Activated CD4-positive, alpha-beta memory T cell treated with anti-CD3 and anti-CD28 coated beads, Interleukin-2, amount 10 ng/mL, durations not matched to agents 7 days and 5 days (primary cell): ENCODE measurements at regions of chr2 and their contacts with region 1.

Region 1: GRCh38 chr2:136135921-136136906 is 18.3 kb upstream of the CXCR4 start:
- DNase-seq: peak; percentile 67
- H3K4me3 Mint-ChIP-seq: no peak overlapping the region
- H3K27ac Mint-ChIP-seq: peak overlapping the region; percentile 86
- H3K4me1 Mint-ChIP-seq: peaks cover 84% of the 10 kb centered on the region
- H3K27me3 Mint-ChIP-seq: peaks cover 43% of the 10 kb centered on the region

Region 2: GRCh38 chr2:135985018-135985825 is 151.0 kb before region 1 on chr2 and contains the start of gene DARS1:
- CTCF ChIA-PET with region 1: interaction called, 3 read pairs
- POLR2A ChIA-PET with region 1: interaction called, 27 read pairs
- DNase-seq: peak; percentile 88
- H3K4me3 Mint-ChIP-seq: peak within 1 kb of the TSS; percentile 87
- H3K27ac Mint-ChIP-seq: peak within 1 kb of the TSS; percentile 87
- H3K4me1 Mint-ChIP-seq: peaks cover 47% of the 10 kb centered on the region
- H3K27me3 Mint-ChIP-seq: no peaks in the 10 kb centered on the region
- total RNA-seq, gene DARS1: 147 to 151 TPM

Region 3: GRCh38 chr2:136014411-136014810 is 121.8 kb before region 1 on chr2:
- CTCF ChIA-PET with region 1: no interaction called
- POLR2A ChIA-PET with region 1: no interaction called
- DNase-seq: no peak
- H3K4me3 Mint-ChIP-seq: no peak overlapping the region
- H3K27ac Mint-ChIP-seq: no peak overlapping the region
- H3K4me1 Mint-ChIP-seq: peaks cover 28% of the 10 kb centered on the region
- H3K27me3 Mint-ChIP-seq: no peaks in the 10 kb centered on the region

Region 4: GRCh38 chr2:136052369-136053362 is 83.5 kb before region 1 on chr2:
- CTCF ChIA-PET with region 1: interaction called, 5 read pairs
- POLR2A ChIA-PET with region 1: interaction called, 64 read pairs
- DNase-seq: peak; percentile 31
- H3K4me3 Mint-ChIP-seq: peak overlapping the region; percentile 53
- H3K27ac Mint-ChIP-seq: peak overlapping the region; percentile 87
- H3K4me1 Mint-ChIP-seq: peaks cover 92% of the 10 kb centered on the region
- H3K27me3 Mint-ChIP-seq: no peaks in the 10 kb centered on the region

Region 5: DNA sequence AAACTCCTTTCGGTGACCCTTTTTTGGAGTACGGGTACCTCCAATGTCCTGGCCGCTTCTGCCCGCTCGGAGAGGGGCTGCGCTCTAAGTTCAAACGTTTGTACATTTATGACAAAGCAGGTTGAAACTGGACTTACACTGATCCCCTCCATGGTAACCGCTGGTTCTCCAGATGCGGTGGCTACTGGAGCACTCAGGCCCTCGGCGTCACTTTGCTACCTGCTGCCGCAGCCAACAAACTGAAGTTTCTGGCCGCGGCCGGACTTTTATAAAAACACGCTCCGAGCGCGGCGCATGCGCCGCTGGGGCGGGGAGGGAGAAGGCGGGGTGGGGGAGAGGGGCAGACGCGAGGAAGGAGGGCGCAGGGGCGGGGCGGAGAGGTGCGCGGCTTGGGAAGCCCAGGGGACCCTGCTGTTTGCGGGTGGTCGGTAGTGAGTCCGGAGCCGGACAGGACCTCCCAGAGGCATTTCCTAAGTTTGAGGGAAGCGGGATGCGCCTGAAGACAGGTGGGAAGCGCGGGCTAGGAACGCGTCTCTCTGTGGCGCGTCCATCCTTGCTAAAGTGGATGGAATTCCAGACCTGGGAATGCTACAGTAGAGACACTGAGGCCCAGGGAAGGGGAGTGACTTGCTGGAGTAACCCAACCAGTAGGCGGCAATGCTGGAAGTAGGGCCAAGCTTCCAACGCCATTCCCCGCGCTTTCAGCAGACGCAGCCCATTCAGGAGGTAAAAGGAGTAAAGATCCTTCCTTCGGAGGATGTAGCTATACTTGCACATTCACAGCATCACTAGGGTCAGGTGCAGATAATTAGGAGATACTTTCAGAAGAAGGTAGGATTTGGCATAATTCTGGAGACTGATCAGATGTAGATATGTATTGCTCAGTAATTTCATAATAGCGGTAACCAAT is 18.1 kb before region 1 on chr2 and contains the start of gene CXCR4:
- CTCF ChIA-PET with region 1: interaction called, 3 read pairs
- POLR2A ChIA-PET with region 1: interaction called, 184 read pairs
- DNase-seq: peak; percentile 90
- H3K4me3 Mint-ChIP-seq: peak within 1 kb of the TSS; percentile 98
- H3K27ac Mint-ChIP-seq: peak within 1 kb of the TSS; percentile 97
- H3K4me1 Mint-ChIP-seq: peaks cover 43% of the 10 kb centered on the region
- H3K27me3 Mint-ChIP-seq: peaks cover 31% of the 10 kb centered on the region
- total RNA-seq, gene CXCR4: 202 to 212 TPM

Region 6: GRCh38 chr2:136162438-136162837 is 26.2 kb after region 1 on chr2:
- CTCF ChIA-PET with region 1: no interaction called
- POLR2A ChIA-PET with region 1: no interaction called
- DNase-seq: no peak
- H3K4me3 Mint-ChIP-seq: no peak overlapping the region
- H3K27ac Mint-ChIP-seq: no peak overlapping the region
- H3K4me1 Mint-ChIP-seq: peaks cover 11% of the 10 kb centered on the region
- H3K27me3 Mint-ChIP-seq: peaks cover 4% of the 10 kb centered on the region

Region 7: GRCh38 chr2:136238286-136239078 is 102.3 kb after region 1 on chr2:
- CTCF ChIA-PET with region 1: no interaction called
- POLR2A ChIA-PET with region 1: interaction called, 10 read pairs
- DNase-seq: peak; percentile 53
- H3K4me3 Mint-ChIP-seq: no peak overlapping the region
- H3K27ac Mint-ChIP-seq: peak overlapping the region; percentile 75
- H3K4me1 Mint-ChIP-seq: peaks cover 58% of the 10 kb centered on the region
- H3K27me3 Mint-ChIP-seq: no peaks in the 10 kb centered on the region

Region 8: GRCh38 chr2:136378712-136379595 is 242.7 kb after region 1 on chr2:
- CTCF ChIA-PET with region 1: interaction called, 6 read pairs
- POLR2A ChIA-PET with region 1: interaction called, 13 read pairs
- DNase-seq: peak; percentile 82
- H3K4me3 Mint-ChIP-seq: no peak overlapping the region
- H3K27ac Mint-ChIP-seq: peak overlapping the region; percentile 37
- H3K4me1 Mint-ChIP-seq: peaks cover 87% of the 10 kb centered on the region
- H3K27me3 Mint-ChIP-seq: no peaks in the 10 kb centered on the region